MCF 10A (cell line): ENCODE measurements at regions of chr16 and their contacts with region 1.

Region 1: GRCh38 chr16:87636072-87636684 is 33.9 kb downstream of the JPH3 start:
- DNase-seq: peak; percentile 93
- H3K4me3 Mint-ChIP-seq: peak overlapping the region; percentile 67
- H3K27ac Mint-ChIP-seq: no peak overlapping the region
- H3K4me1 Mint-ChIP-seq: no peaks in the 10 kb centered on the region
- H3K27me3 Mint-ChIP-seq: peaks cover 32% of the 10 kb centered on the region
- CTCF ChIP-seq: peak; percentile 86

Region 2: GRCh38 chr16:87387942-87388817 is 248.0 kb before region 1 on chr16:
- CTCF ChIA-PET with region 1: interaction called, 35 read pairs
- POLR2A ChIA-PET with region 1: interaction called, 15 read pairs
- intact Hi-C with region 1: no loop called
- DNase-seq: peak; percentile 99
- H3K4me3 Mint-ChIP-seq: peak overlapping the region; percentile 64
- H3K27ac Mint-ChIP-seq: peak overlapping the region; percentile 94
- H3K4me1 Mint-ChIP-seq: peaks cover 25% of the 10 kb centered on the region
- H3K27me3 Mint-ChIP-seq: no peaks in the 10 kb centered on the region
- CTCF ChIP-seq: no peak

Region 3: GRCh38 chr16:87451563-87452210 is 184.5 kb before region 1 on chr16:
- CTCF ChIA-PET with region 1: interaction called, 21 read pairs
- POLR2A ChIA-PET with region 1: no interaction called
- intact Hi-C with region 1: no loop called
- DNase-seq: no peak
- H3K4me3 Mint-ChIP-seq: no peak overlapping the region
- H3K27ac Mint-ChIP-seq: no peak overlapping the region
- H3K4me1 Mint-ChIP-seq: peaks cover 6% of the 10 kb centered on the region
- H3K27me3 Mint-ChIP-seq: no peaks in the 10 kb centered on the region
- CTCF ChIP-seq: no peak

Region 4: DNA sequence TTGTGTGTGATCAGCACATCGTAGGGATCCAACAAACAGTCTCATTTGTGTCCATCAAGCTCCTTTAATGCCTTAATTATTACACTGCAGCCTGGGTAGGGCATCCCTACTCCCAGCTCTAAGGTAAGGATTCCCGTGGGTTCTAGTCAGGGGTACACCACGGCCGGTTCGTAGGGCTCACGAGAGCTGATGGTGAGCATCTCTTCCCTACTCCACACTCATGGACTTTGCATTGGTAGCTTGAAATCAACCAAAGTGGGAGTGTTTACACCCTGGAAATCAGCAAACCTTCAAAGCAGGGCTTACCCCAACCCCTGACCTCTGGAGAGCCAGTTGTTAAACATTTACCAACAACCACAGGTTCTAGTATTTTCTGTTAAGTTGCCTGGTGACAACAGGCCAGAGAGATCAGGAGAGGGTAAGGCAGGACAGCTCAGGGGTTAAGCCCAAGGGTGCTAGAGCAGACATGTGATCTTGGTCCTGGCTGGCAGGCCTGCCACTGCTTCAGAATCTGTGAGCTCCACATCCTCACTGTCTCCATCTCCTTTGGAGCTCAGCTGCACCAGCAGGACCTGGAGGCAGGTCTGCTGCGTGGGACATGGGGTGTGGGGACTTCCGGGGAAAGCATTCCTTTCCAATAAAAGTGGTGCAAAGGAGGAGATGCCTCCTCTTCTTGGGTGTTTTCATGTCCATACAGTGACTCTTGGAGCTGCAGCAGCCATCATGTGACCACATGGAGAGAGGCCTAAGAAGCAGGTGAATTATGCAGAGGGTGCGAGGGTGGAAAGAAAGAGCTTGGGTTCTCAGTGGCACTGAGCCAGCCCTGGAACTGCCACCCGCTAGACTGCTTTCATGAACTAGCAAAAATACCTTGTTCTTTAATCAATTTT is 107.2 kb before region 1 on chr16:
- CTCF ChIA-PET with region 1: interaction called, 17 read pairs
- POLR2A ChIA-PET with region 1: no interaction called
- intact Hi-C with region 1: no loop called
- DNase-seq: no peak
- H3K4me3 Mint-ChIP-seq: no peak overlapping the region
- H3K27ac Mint-ChIP-seq: no peak overlapping the region
- H3K4me1 Mint-ChIP-seq: peaks cover 8% of the 10 kb centered on the region
- H3K27me3 Mint-ChIP-seq: peaks cover 10% of the 10 kb centered on the region
- CTCF ChIP-seq: no peak

Region 5: DNA sequence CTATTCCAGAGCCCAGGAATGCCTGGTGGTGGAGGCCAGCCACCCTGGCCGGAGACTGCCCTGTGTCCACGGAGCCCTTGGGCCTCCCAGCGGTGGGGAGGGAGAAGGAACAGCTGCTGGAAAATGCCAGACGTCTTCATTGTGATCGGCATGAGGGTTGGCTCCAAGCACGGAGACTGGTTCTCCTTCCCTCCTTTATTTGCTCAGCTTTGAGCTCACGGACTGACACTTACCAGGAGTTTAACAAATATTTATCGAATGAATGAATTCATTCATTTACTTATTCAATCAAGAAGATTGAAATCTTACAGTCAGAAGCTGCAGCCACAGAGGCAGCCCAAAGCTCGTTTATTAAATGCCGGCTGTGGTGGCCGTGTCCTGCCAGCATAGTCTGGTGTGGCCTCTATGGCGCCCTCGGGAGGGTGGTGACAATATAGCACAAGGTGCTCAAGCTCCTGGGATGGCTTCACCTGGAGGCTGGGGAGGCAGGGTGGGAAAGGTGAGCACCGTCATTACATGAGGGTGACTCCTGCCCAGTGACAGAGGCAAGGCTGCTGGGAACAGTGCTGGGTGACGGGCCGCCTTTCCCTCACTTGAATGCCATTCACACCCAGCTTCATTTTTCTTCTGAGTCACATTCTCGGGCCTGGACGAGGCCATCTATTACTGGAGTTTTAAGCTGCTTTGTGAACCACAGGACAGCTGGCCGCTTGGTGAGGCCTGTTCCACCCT is 64.9 kb before region 1 on chr16:
- CTCF ChIA-PET with region 1: interaction called, 14 read pairs
- POLR2A ChIA-PET with region 1: no interaction called
- intact Hi-C with region 1: no loop called
- DNase-seq: peak; percentile 28
- H3K4me3 Mint-ChIP-seq: no peak overlapping the region
- H3K27ac Mint-ChIP-seq: no peak overlapping the region
- H3K4me1 Mint-ChIP-seq: no peaks in the 10 kb centered on the region
- H3K27me3 Mint-ChIP-seq: peaks cover 15% of the 10 kb centered on the region
- CTCF ChIP-seq: peak; percentile 17

Region 6: GRCh38 chr16:87648236-87648635 is 12.1 kb after region 1 on chr16:
- CTCF ChIA-PET with region 1: interaction called, 31 read pairs
- POLR2A ChIA-PET with region 1: no interaction called
- intact Hi-C with region 1: no loop called
- DNase-seq: no peak
- H3K4me3 Mint-ChIP-seq: no peak overlapping the region
- H3K27ac Mint-ChIP-seq: no peak overlapping the region
- H3K4me1 Mint-ChIP-seq: no peaks in the 10 kb centered on the region
- H3K27me3 Mint-ChIP-seq: peaks cover 62% of the 10 kb centered on the region
- CTCF ChIP-seq: no peak